PC-9 (cell line): ENCODE measurements at regions of chr15 and their contacts with region 1.

Region 1: GRCh38 chr15:71131601-71132362 is 16.5 kb downstream of the THSD4 start:
- DNase-seq: peak; percentile 25 to 77
- H3K4me3 ChIP-seq: no peak overlapping the region
- H3K27ac ChIP-seq: peak overlapping the region; percentile 88
- H3K4me1 ChIP-seq: peaks cover 49% of the 10 kb centered on the region
- H3K27me3 ChIP-seq: no peaks in the 10 kb centered on the region
- CTCF ChIP-seq: no peak

Region 2: DNA sequence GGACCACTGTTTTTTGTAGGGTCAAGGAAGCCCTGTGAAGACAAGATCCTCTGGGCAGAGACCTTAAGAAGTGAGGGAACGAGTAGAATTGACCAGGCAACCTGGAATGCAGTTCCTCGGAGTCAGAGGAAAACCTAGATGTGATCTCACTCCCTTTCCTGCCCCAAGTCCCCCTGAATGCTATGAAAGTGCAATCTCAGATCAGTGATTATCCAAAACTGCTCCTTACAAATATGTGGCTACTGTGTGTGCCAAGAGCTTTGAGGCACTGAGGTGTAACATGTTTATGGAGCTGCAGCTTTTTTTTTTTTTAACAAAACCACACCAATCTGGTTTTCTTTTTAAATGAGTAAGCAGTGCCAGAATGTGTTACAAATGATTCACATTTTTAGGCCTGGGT is 19.3 kb after region 1 on chr15:
- CTCF ChIA-PET with region 1: no interaction called
- POLR2A ChIA-PET with region 1: interaction called, 12 read pairs
- intact Hi-C with region 1: no loop called
- DNase-seq: no peak
- H3K4me3 ChIP-seq: no peak overlapping the region
- H3K27ac ChIP-seq: no peak overlapping the region
- H3K4me1 ChIP-seq: no peaks in the 10 kb centered on the region
- H3K27me3 ChIP-seq: no peaks in the 10 kb centered on the region
- CTCF ChIP-seq: no peak